ENCODE measurements at regions of chr1 and their contacts with region 1.

Region 1: GRCh38 chr1:79042117-79042516 is 35.6 kb upstream of the ADGRL4 start:
- DNase-seq: peak; percentile 58
- H3K4me3 ChIP-seq: no peak overlapping the region
- H3K27ac ChIP-seq: peak overlapping the region; percentile 59
- H3K4me1 ChIP-seq: peaks cover 30% of the 10 kb centered on the region
- H3K27me3 ChIP-seq: no peaks in the 10 kb centered on the region
- CTCF ChIP-seq: no peak
- POLR2A ChIP-seq: no peak

Region 2: GRCh38 chr1:77514921-77515776 is 1527.0 kb before region 1 on chr1:
- CTCF ChIA-PET with region 1: no interaction called
- POLR2A ChIA-PET with region 1: no interaction called
- dilution Hi-C with region 1: no loop called
- intact Hi-C with region 1: loop called (anchors 10 kb)
- DNase-seq: peak; percentile 68
- H3K4me3 ChIP-seq: no peak overlapping the region
- H3K27ac ChIP-seq: peak overlapping the region; percentile 74
- H3K4me1 ChIP-seq: peaks cover 32% of the 10 kb centered on the region
- H3K27me3 ChIP-seq: no peaks in the 10 kb centered on the region
- CTCF ChIP-seq: peak in 1 of 2 donors; percentile 24
- POLR2A ChIP-seq: no peak

Region 3: DNA sequence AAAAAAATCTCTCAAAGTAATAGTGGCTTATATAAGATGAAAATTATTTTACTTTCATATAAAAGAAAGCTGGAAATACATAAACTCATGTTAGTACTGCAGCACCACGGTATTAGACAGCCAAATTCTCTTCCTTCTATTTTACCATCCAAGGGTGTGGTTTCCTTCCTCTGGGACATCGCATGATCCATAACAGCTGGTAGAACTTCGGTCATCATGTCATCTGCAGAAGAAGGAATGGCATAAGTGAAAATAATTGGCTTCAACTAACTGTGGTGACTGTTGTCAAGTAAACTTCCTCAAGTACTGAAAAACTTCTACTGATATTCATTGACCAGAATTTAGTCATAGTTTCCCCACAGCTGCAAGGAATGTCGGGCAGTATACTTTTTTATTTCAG is 450.1 kb before region 1 on chr1:
- CTCF ChIA-PET with region 1: no interaction called
- POLR2A ChIA-PET with region 1: no interaction called
- dilution Hi-C with region 1: no loop called
- intact Hi-C with region 1: no loop called
- DNase-seq: no peak
- H3K4me3 ChIP-seq: no peak overlapping the region
- H3K27ac ChIP-seq: no peak overlapping the region
- H3K4me1 ChIP-seq: no peaks in the 10 kb centered on the region
- H3K27me3 ChIP-seq: peaks cover 2% of the 10 kb centered on the region in 2 experiments
- CTCF ChIP-seq: no peak
- POLR2A ChIP-seq: no peak

Region 4: GRCh38 chr1:79052829-79053449 is 10.8 kb after region 1 on chr1:
- CTCF ChIA-PET with region 1: interaction called, 10 read pairs
- POLR2A ChIA-PET with region 1: no interaction called
- dilution Hi-C with region 1: no loop called
- intact Hi-C with region 1: no loop called
- DNase-seq: peak; percentile 13
- H3K4me3 ChIP-seq: peak overlapping the region; percentile 20 to 76 (median 27)
- H3K27ac ChIP-seq: no peak overlapping the region
- H3K4me1 ChIP-seq: no peaks in the 10 kb centered on the region
- H3K27me3 ChIP-seq: no peaks in the 10 kb centered on the region
- CTCF ChIP-seq: no peak
- POLR2A ChIP-seq: no peak

Region 5: DNA sequence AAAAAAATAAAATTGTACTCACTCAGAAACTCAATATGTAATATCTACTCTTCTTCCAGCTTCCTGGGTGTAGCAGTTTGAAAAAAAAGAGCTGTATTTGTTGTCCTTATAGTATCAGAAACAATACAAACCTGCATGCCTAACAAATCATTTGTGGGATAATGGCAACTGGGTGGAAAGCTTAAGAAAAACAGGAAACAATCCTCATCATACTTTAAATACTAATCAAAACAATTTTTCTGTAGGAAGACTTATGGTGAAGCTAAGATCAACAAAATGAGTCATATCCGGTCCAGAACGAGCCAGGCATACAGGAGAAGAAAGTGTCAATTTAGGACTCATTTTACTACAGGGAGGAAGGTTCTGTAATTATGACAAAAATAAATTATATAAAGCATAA is 146.2 kb after region 1 on chr1:
- CTCF ChIA-PET with region 1: interaction called, 3 read pairs
- POLR2A ChIA-PET with region 1: no interaction called
- dilution Hi-C with region 1: no loop called
- intact Hi-C with region 1: loop called (anchors 2 kb)
- DNase-seq: peak; percentile 90
- H3K4me3 ChIP-seq: peak overlapping the region in 2 of 3 experiments; percentile 15 to 26
- H3K27ac ChIP-seq: peak overlapping the region; percentile 51
- H3K4me1 ChIP-seq: peaks cover 39% of the 10 kb centered on the region
- H3K27me3 ChIP-seq: no peaks in the 10 kb centered on the region
- CTCF ChIP-seq: no peak
- POLR2A ChIP-seq: no peak